Heart left ventricle (tissue), 16 donors: ENCODE measurements at regions of chr13 and their contacts with region 1.

Region 1: GRCh38 chr13:104875038-104875754 is 1660.3 kb downstream of the EFNB2 start:
- DNase-seq: no peak
- ATAC-seq: no peak
- H3K4me3 ChIP-seq: no peak overlapping the region
- H3K27ac ChIP-seq: no peak overlapping the region
- H3K4me1 ChIP-seq: no peaks in the 10 kb centered on the region
- H3K27me3 ChIP-seq: no peaks in the 10 kb centered on the region
- CTCF ChIP-seq: no peak
- POLR2A ChIP-seq: no peak

Region 2: DNA sequence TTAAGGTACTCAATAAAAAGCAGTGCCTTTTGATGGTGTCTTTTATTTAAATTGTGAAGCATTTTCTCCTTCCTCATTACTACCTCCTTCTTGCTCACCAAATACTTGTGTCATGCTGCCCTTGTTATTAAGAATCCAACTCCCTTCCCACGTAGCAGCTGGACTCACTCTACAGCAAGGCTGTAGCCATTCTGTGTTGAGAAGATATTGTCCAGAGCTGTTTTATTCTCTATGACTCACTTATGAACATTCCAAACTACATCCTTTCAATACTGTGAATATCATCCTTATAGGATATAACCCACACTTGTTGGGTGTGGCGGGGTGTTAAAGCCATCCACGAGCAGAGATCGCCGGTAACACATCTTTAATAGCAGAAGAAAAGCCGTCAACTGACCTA is 137.5 kb before region 1 on chr13:
- intact Hi-C with region 1: no loop called
- DNase-seq: no peak
- ATAC-seq: peak; percentile 27 to 78 (median 58)
- H3K4me3 ChIP-seq: no peak overlapping the region
- H3K27ac ChIP-seq: no peak overlapping the region
- H3K4me1 ChIP-seq: no peaks in the 10 kb centered on the region
- H3K27me3 ChIP-seq: no peaks in the 10 kb centered on the region
- CTCF ChIP-seq: no peak
- POLR2A ChIP-seq: no peak

Region 3: DNA sequence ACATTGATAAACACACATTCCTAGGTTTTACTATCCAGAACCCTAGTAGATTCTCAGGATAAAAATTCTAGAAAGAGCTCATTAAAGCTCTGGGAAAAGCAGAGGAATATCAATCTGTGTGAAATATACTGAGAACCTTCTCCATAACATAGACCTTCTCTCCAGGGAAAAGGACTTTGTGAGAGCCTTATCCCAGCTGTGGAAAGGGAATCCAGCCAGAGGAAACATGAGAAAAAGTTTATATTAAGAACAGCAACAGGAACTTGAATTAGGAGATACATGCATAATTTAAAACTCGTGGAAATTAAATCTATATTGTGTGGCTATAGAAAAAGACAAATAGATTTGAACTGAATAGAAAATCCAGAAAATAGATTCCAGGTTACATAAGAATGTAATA is 20.3 kb after region 1 on chr13:
- intact Hi-C with region 1: loop called in 1 of 10 experiments (anchors 2 kb)
- DNase-seq: no peak
- ATAC-seq: no peak
- H3K4me3 ChIP-seq: no peak overlapping the region
- H3K27ac ChIP-seq: no peak overlapping the region
- H3K4me1 ChIP-seq: no peaks in the 10 kb centered on the region
- H3K27me3 ChIP-seq: no peaks in the 10 kb centered on the region
- CTCF ChIP-seq: no peak
- POLR2A ChIP-seq: no peak

Region 4: GRCh38 chr13:105016266-105016665 is 141.1 kb after region 1 on chr13:
- intact Hi-C with region 1: no loop called
- DNase-seq: no peak
- ATAC-seq: no peak
- H3K4me3 ChIP-seq: no peak overlapping the region
- H3K27ac ChIP-seq: no peak overlapping the region
- H3K4me1 ChIP-seq: no peaks in the 10 kb centered on the region
- H3K27me3 ChIP-seq: no peaks in the 10 kb centered on the region
- CTCF ChIP-seq: no peak
- POLR2A ChIP-seq: no peak